OCI-LY7 (cell line): ENCODE measurements at regions of chr2 and their contacts with region 1.

Region 1: GRCh38 chr2:155377266-155377680 is 678.8 kb downstream of the KCNJ3 start:
- DNase-seq: peak; percentile 18
- H3K4me3 ChIP-seq: no peak overlapping the region
- H3K27ac ChIP-seq: no peak overlapping the region
- H3K4me1 ChIP-seq: no peaks in the 10 kb centered on the region
- CTCF ChIP-seq: peak; percentile 77

Region 2: DNA sequence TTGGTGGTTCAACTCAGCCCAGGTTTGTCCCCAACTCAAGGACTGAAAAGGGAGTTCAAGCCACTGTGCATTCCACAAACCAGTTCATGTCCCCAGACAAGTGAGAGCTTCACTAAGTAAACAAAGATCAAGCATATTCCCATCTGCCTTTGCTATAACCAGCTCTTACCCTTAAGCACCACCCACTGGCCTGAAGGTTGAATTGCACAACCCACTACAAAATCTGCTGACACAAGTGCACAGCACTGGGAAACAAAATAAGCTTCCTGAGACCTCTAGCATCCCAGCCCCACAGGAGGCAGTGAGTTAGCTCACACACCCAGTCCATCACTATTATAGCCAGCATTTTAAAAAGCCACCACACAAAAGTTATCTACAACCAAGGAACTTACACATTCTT is 438.6 kb after region 1 on chr2:
- CTCF ChIA-PET with region 1: interaction called, 3 read pairs
- POLR2A ChIA-PET with region 1: no interaction called
- intact Hi-C with region 1: loop called (anchors 2 kb)
- DNase-seq: peak; percentile 29
- H3K4me3 ChIP-seq: no peak overlapping the region
- H3K27ac ChIP-seq: no peak overlapping the region
- H3K4me1 ChIP-seq: no peaks in the 10 kb centered on the region
- CTCF ChIP-seq: peak; percentile 72

Region 3: DNA sequence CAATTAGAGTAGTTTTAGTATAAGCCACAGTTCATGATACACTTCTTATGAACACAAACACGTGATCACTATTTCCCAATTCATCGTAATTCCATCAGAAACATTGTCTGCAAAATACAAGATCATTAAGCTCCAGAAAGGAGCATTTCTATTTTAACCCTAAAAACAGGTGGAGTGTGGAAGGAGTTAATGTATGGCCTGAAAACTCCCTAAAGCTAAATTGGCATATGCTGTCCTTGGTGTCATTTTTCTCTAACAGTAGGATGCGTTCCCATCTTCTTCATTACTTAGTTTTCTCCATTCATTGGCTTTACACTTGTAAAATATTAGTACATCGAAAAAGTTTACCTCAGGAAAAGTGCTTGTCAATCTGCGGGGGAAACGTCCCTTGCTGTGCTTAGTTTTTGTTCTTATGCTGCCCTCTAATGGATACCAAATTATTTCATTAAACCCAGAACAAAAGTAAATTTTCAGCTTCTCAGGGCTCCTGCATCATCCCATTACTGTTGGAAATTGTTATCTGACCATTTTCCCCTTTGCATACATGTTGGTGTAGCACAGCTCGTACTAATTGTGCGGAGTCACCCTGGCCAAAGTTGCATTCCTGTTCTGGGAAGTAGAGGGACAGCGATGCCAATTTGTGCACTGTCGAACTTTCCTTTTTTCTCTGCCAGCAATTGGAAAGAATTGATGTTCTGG is 1212.3 kb after region 1 on chr2:
- CTCF ChIA-PET with region 1: no interaction called
- POLR2A ChIA-PET with region 1: interaction called, 3 read pairs
- intact Hi-C with region 1: loop called (anchors 2 kb)
- DNase-seq: peak; percentile 35
- H3K4me3 ChIP-seq: no peak overlapping the region
- H3K27ac ChIP-seq: no peak overlapping the region
- H3K4me1 ChIP-seq: no peaks in the 10 kb centered on the region
- CTCF ChIP-seq: peak; percentile 77

Region 4: GRCh38 chr2:156892467-156893281 is 1515.4 kb after region 1 on chr2:
- CTCF ChIA-PET with region 1: no interaction called
- POLR2A ChIA-PET with region 1: no interaction called
- intact Hi-C with region 1: loop called (anchors 10 kb)
- DNase-seq: peak; percentile 15
- H3K4me3 ChIP-seq: no peak overlapping the region
- H3K27ac ChIP-seq: no peak overlapping the region
- H3K4me1 ChIP-seq: no peaks in the 10 kb centered on the region
- CTCF ChIP-seq: peak; percentile 69

Region 5: DNA sequence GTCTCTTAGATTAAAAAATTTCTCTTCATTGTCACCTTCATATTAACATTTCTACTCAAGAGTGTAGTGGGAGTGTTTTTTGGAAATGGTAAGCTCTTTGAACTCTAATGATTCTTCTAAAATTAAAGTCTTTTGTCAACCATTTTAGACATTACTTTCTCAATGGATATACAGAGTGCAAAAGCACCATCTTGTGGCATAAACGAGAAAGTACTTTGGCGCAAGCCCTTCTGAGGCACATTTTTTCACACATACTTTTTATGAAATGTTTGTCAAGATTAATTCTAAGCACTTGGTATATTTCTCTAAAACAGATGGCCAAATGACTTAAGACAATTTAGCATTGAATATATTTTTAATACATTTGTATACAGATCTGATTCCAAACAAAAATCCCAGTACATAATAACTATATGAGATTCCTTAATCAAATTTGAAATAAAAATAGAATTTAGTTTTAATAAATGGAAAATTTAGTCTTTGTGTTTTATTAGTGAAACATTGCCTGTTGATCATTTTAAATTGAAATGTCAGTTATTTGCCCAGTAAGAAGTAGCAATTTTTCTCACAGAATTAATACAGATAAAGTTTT is 1816.9 kb after region 1 on chr2:
- CTCF ChIA-PET with region 1: no interaction called
- POLR2A ChIA-PET with region 1: no interaction called
- intact Hi-C with region 1: loop called (anchors 10 kb)
- DNase-seq: peak; percentile 47
- H3K4me3 ChIP-seq: no peak overlapping the region
- H3K27ac ChIP-seq: no peak overlapping the region
- H3K4me1 ChIP-seq: no peaks in the 10 kb centered on the region
- CTCF ChIP-seq: peak; percentile 88